Heart left ventricle (tissue), 16 donors: ENCODE measurements at regions of chr15 and their contacts with region 1.

Region 1: GRCh38 chr15:62912808-62913207 is 129.7 kb upstream of the TPM1 start:
- DNase-seq: no peak
- ATAC-seq: peak in 3 of 4 donors; percentile 16 to 55 (median 52)
- H3K4me3 ChIP-seq: no peak overlapping the region
- H3K27ac ChIP-seq: peak overlapping the region in 1 of 12 donors; percentile 26
- H3K4me1 ChIP-seq: peaks cover 0 to 13% (median 6%) of the 10 kb centered on the region in 12 donors
- H3K27me3 ChIP-seq: no peaks in the 10 kb centered on the region
- CTCF ChIP-seq: no peak
- POLR2A ChIP-seq: no peak

Region 2: GRCh38 chr15:62985768-62986167 is 73.0 kb after region 1 on chr15:
- intact Hi-C with region 1: loop called in 1 of 10 experiments (anchors 10 kb)
- DNase-seq: no peak
- ATAC-seq: no peak
- H3K4me3 ChIP-seq: no peak overlapping the region
- H3K27ac ChIP-seq: no peak overlapping the region
- H3K4me1 ChIP-seq: peaks cover 0 to 6% (median 0%) of the 10 kb centered on the region in 12 donors
- H3K27me3 ChIP-seq: no peaks in the 10 kb centered on the region
- CTCF ChIP-seq: no peak
- POLR2A ChIP-seq: no peak